Adrenal gland (tissue), 19 donors: ENCODE measurements at regions of chr2 and their contacts with region 1.

Region 1: DNA sequence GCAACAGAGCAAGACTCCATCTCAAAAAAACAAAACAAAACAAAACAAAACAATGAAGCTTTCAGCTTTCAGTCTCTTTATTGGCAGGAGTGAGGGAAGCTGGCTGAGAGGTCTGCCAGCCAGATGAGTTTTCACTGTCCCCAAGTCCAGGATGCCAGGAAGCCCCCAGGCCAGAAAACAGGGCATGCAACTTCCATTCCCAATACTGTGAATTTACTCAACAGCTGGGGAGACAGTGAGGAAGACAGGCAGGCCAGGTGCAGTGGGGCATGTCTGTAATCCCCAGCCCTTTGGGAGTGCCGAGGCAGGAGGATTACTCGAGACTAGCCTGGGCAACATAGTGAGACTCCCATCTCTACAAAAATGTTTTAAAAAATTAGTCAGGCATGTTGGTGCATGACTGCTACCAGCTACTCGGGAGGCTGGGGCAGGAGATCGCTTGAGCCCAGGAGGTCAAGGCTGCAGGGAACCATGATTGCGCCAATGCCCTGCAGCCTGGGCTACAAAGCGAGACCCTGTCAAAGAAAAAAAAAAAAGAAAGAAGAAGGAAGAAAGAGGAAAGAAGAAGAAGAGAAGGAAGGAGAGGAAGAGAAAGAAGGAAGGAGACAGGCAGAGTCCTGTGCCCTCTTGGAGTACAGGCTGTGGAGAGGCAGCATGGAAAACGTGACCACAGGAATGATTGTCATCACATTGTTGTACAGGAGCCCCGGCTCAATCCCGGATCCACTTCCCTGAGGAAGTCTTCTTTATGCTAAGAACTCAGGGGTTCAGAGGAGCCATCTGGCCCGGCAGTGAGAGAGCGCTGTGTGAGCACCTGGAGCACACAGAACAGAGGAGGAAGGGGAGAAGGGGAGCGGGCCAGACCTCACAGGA is 29.2 kb upstream of the POMC start:
- DNase-seq: no peak
- H3K4me3 ChIP-seq: no peak overlapping the region
- H3K27ac ChIP-seq: no peak overlapping the region
- H3K4me1 ChIP-seq: no peaks in the 10 kb centered on the region
- H3K27me3 ChIP-seq: no peaks in the 10 kb centered on the region
- CTCF ChIP-seq: no peak
- POLR2A ChIP-seq: no peak

Region 2: GRCh38 chr2:24971536-24972314 is 225.8 kb before region 1 on chr2 and contains the start of gene DNAJC27:
- intact Hi-C with region 1: loop called in 1 of 2 experiments (anchors 10 kb)
- DNase-seq: peak; percentile 98 to 99 (median 98)
- H3K4me3 ChIP-seq: peak within 1 kb of the TSS; percentile 36 to 94 (median 70)
- H3K27ac ChIP-seq: peak within 1 kb of the TSS; percentile 95 to 98 (median 97)
- H3K4me1 ChIP-seq: peaks cover 8 to 32% of the 10 kb centered on the region in 2 donors
- H3K27me3 ChIP-seq: no peaks in the 10 kb centered on the region
- CTCF ChIP-seq: no peak
- POLR2A ChIP-seq: peak; percentile 94 to 96
- total RNA-seq, gene DNAJC27: 2.1 to 10.8 (median 7.3) TPM

Region 3: GRCh38 chr2:24984912-24985311 is 212.7 kb before region 1 on chr2:
- intact Hi-C with region 1: loop called in 1 of 2 experiments (anchors 10 kb)
- DNase-seq: peak in 5 of 7 donors; percentile 30 to 90 (median 44)
- H3K4me3 ChIP-seq: no peak overlapping the region
- H3K27ac ChIP-seq: peak overlapping the region in 1 of 5 donors; percentile 56
- H3K4me1 ChIP-seq: peaks cover 0 to 29% of the 10 kb centered on the region in 2 donors
- H3K27me3 ChIP-seq: no peaks in the 10 kb centered on the region
- CTCF ChIP-seq: no peak
- POLR2A ChIP-seq: no peak

Region 4: DNA sequence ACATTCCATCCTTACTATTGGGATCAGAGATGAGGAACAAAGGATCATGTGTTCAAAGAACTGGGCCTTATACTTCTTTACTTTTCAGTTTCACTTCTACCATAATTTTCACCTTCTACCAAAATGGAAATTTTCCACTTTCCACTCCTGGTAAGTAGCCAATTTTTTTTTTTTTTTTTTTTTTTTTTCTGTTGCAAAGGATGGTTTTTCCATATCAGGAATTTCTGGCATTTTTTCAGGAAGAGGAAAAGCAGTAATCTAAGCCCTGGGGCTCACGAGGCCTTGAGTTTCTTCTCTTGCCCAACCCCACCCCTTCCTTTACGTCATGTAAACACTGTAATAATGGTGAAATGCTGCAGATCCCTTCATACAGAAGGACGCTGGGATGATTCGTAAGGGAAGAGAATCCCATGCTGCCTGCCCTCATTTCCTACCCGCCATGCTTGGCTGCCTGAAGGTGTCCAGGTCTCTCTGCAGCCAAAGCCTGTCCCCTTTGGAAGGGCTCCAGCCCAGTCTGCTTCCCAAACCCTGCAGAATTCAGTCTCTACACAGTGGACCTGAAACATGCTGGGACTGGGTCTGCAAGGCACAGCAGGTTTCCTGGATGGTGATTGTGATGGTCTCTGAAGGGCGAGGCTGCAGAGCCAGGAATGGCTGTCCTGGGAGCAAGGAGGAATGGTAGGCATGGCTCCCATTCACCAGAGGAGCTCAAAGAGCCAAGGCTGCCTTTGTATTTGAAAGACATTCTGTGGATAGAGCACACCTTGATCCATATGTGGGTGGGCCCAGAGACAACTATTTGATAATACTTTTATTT is 98.7 kb before region 1 on chr2:
- intact Hi-C with region 1: no loop called
- DNase-seq: peak in 6 of 7 donors; percentile 21 to 79 (median 64)
- H3K4me3 ChIP-seq: no peak overlapping the region
- H3K27ac ChIP-seq: peak overlapping the region in 4 of 5 donors; percentile 39 to 73 (median 57)
- H3K4me1 ChIP-seq: peaks cover 0 to 12% of the 10 kb centered on the region in 2 donors
- H3K27me3 ChIP-seq: no peaks in the 10 kb centered on the region
- CTCF ChIP-seq: no peak
- POLR2A ChIP-seq: no peak